Gastrocnemius medialis (tissue), 4 donors: ENCODE measurements at regions of chr19 and their contacts with region 1.

Region 1: GRCh38 chr19:14006243-14006765 is at the start of gene RFX1:
- DNase-seq: peak; percentile 99 to 100
- ATAC-seq: peak; percentile 82 to 85
- H3K4me3 ChIP-seq: peak within 1 kb of the TSS; percentile 84 to 97 (median 92)
- H3K27ac ChIP-seq: peak within 1 kb of the TSS; percentile 96 to 100 (median 99)
- H3K4me1 ChIP-seq: peaks cover 34 to 45% of the 10 kb centered on the region in 2 donors
- H3K27me3 ChIP-seq: no peaks in the 10 kb centered on the region
- CTCF ChIP-seq: peak in 1 of 5 experiments; percentile 41
- POLR2A ChIP-seq: no peak
- total RNA-seq, gene RFX1: 2.7 to 7.2 (median 4.4) TPM

Region 2: GRCh38 chr19:13794757-13795589 is 211.3 kb before region 1 on chr19 and contains the start of gene ZSWIM4:
- in situ Hi-C with region 1: no loop called
- intact Hi-C with region 1: loop called (anchors 10 kb)
- DNase-seq: peak; percentile 99
- ATAC-seq: peak; percentile 95 to 96
- H3K4me3 ChIP-seq: peak within 1 kb of the TSS; percentile 64 to 96 (median 78)
- H3K27ac ChIP-seq: peak within 1 kb of the TSS; percentile 79 to 96 (median 90)
- H3K4me1 ChIP-seq: peaks cover 24 to 26% of the 10 kb centered on the region in 2 donors
- H3K27me3 ChIP-seq: no peaks in the 10 kb centered on the region
- CTCF ChIP-seq: no peak
- POLR2A ChIP-seq: peak; percentile 57 to 84
- total RNA-seq, gene ZSWIM4: 3.9 to 6.3 (median 5.0) TPM

Region 3: GRCh38 chr19:13905938-13906904 is 100.1 kb before region 1 on chr19 and contains the starts of genes BRME1 and CC2D1A:
- in situ Hi-C with region 1: no loop called
- intact Hi-C with region 1: loop called (anchors 2 kb)
- DNase-seq: peak; percentile 85 to 88
- ATAC-seq: peak; percentile 93 to 94
- H3K4me3 ChIP-seq: peak within 1 kb of the TSS; percentile 72 to 96 (median 90)
- H3K27ac ChIP-seq: peak within 1 kb of the TSS; percentile 75 to 86 (median 76)
- H3K4me1 ChIP-seq: peaks cover 8 to 12% of the 10 kb centered on the region in 2 donors
- H3K27me3 ChIP-seq: no peaks in the 10 kb centered on the region
- CTCF ChIP-seq: peak in 1 of 5 experiments; percentile 13
- POLR2A ChIP-seq: peak; percentile 39 to 61
- total RNA-seq, gene BRME1: 0.19 to 1.0 (median 0.56) TPM
- total RNA-seq, gene CC2D1A: 22.3 to 44.9 (median 33.7) TPM

Region 4: GRCh38 chr19:13952154-13953035 is 53.9 kb before region 1 on chr19 and contains the start of gene DCAF15:
- in situ Hi-C with region 1: loop called in 1 of 4 experiments (anchors 5 kb)
- intact Hi-C with region 1: loop called (anchors 1 kb)
- DNase-seq: peak; percentile 100
- ATAC-seq: peak; percentile 98 to 99
- H3K4me3 ChIP-seq: peak within 1 kb of the TSS; percentile 64 to 86 (median 80)
- H3K27ac ChIP-seq: peak within 1 kb of the TSS; percentile 87 to 90 (median 89)
- H3K4me1 ChIP-seq: peaks cover 18 to 26% of the 10 kb centered on the region in 2 donors
- H3K27me3 ChIP-seq: no peaks in the 10 kb centered on the region
- CTCF ChIP-seq: no peak
- POLR2A ChIP-seq: peak; percentile 44 to 53
- total RNA-seq, gene DCAF15: 11.2 to 38.8 (median 18.0) TPM